Mammary epithelial cell (primary cell): ENCODE measurements at regions of chr10 and their contacts with region 1.

Region 1: GRCh38 chr10:116742367-116743265 is at the start of gene HSPA12A:
- DNase-seq: peak; percentile 76
- H3K4me3 ChIP-seq: peak within 1 kb of the TSS; percentile 57 to 74 (median 57)
- H3K27ac ChIP-seq: peak within 1 kb of the TSS; percentile 51
- H3K4me1 ChIP-seq: peaks cover 15% of the 10 kb centered on the region
- H3K27me3 ChIP-seq: no peaks in the 10 kb centered on the region
- CTCF ChIP-seq: no peak
- total RNA-seq, gene HSPA12A: 10.8 to 10.9 TPM

Region 2: GRCh38 chr10:116683821-116684220 is 58.8 kb before region 1 on chr10:
- CTCF ChIA-PET with region 1: no interaction called
- dilution Hi-C with region 1: no loop called
- in situ Hi-C with region 1: no loop called
- intact Hi-C with region 1: loop called (anchors 2 kb)
- DNase-seq: no peak
- H3K4me3 ChIP-seq: no peak overlapping the region
- H3K27ac ChIP-seq: no peak overlapping the region
- H3K4me1 ChIP-seq: no peaks in the 10 kb centered on the region
- H3K27me3 ChIP-seq: no peaks in the 10 kb centered on the region
- CTCF ChIP-seq: no peak

Region 3: DNA sequence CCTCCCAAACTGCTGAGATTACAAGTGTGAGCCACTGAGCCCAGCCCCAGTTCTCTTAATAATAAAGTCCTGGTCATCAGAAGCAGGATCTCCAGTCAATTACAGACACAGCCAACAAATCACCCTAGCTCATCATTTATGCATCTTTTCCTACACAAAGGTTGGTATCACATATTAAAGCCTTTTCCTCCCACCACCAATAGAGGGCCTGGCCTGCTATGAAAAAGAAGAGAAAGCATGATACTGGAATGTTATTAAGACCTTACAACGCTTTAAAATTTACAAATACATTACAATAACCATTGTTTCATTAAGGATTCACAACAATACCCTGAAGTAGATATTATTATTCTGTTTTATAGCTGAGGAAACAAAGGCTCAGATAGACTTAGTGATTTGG is 369.6 kb after region 1 on chr10:
- CTCF ChIA-PET with region 1: no interaction called
- dilution Hi-C with region 1: no loop called
- in situ Hi-C with region 1: no loop called
- intact Hi-C with region 1: no loop called
- DNase-seq: peak; percentile 12
- H3K4me3 ChIP-seq: no peak overlapping the region
- H3K27ac ChIP-seq: no peak overlapping the region
- H3K4me1 ChIP-seq: no peaks in the 10 kb centered on the region
- H3K27me3 ChIP-seq: peaks cover 3% of the 10 kb centered on the region
- CTCF ChIP-seq: peak; percentile 42 to 48